ENCODE measurements at regions of chr22 and their contacts with region 1.

Region 1: DNA sequence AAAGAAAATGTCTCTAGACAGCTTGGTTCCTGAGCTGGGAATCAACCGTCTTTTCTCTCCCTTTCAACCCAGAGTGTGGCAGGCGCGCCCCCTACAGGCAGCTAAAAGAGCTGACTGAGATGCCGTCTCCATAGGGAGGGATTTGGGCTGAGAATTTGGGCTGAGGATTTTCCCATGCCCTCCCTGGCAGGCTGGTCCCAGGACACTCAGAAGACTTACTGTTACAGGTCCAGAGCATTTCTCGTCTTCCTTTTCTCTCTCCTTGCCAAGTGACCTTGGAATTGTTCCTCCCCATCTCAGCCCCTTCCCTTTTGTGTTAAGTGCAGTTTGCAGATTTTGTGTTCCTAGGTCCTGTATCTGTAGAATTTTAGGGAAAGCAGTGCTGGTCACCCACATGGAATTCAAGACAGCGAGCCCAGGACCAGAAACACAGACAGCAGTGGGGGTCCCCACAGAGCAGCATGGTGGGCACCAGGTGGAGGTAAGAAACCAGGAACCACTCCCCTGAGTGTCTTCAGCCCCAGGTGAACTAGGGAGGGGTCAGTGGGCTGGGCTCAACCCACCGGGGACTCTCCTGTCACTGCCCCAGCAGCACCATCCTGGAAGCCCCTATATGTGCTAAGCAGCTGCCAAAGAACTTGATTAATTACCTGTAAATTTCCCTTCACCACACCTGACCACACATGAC is 9.9 kb upstream of the IGLL5 start:
- DNase-seq: peak; percentile 83
- H3K4me3 Mint-ChIP-seq: no peak overlapping the region
- H3K27ac Mint-ChIP-seq: no peak overlapping the region
- H3K4me1 Mint-ChIP-seq: no peaks in the 10 kb centered on the region
- H3K27me3 Mint-ChIP-seq: peaks cover 59% of the 10 kb centered on the region
- CTCF ChIP-seq: peak; percentile 79

Region 2: GRCh38 chr22:22408731-22409696 is 468.7 kb before region 1 on chr22:
- CTCF ChIA-PET with region 1: no interaction called
- POLR2A ChIA-PET with region 1: no interaction called
- intact Hi-C with region 1: no loop called
- DNase-seq: peak; percentile 39
- H3K4me3 Mint-ChIP-seq: no peak overlapping the region
- H3K27ac Mint-ChIP-seq: no peak overlapping the region
- H3K4me1 Mint-ChIP-seq: no peaks in the 10 kb centered on the region
- H3K27me3 Mint-ChIP-seq: peaks cover 81% of the 10 kb centered on the region
- CTCF ChIP-seq: peak; percentile 39

Region 3: GRCh38 chr22:22753526-22754267 is 124.0 kb before region 1 on chr22:
- CTCF ChIA-PET with region 1: interaction called, 3 read pairs
- POLR2A ChIA-PET with region 1: interaction called, 3 read pairs
- intact Hi-C with region 1: loop called (anchors 1 kb)
- DNase-seq: peak; percentile 72
- H3K4me3 Mint-ChIP-seq: no peak overlapping the region
- H3K27ac Mint-ChIP-seq: no peak overlapping the region
- H3K4me1 Mint-ChIP-seq: peaks cover 27% of the 10 kb centered on the region
- H3K27me3 Mint-ChIP-seq: no peaks in the 10 kb centered on the region
- CTCF ChIP-seq: peak; percentile 69

Region 4: GRCh38 chr22:22787786-22788459 is 89.7 kb before region 1 on chr22:
- CTCF ChIA-PET with region 1: no interaction called
- POLR2A ChIA-PET with region 1: no interaction called
- intact Hi-C with region 1: loop called (anchors 1 kb)
- DNase-seq: peak; percentile 68
- H3K4me3 Mint-ChIP-seq: no peak overlapping the region
- H3K27ac Mint-ChIP-seq: no peak overlapping the region
- H3K4me1 Mint-ChIP-seq: no peaks in the 10 kb centered on the region
- H3K27me3 Mint-ChIP-seq: peaks cover 28% of the 10 kb centered on the region
- CTCF ChIP-seq: peak; percentile 79

Region 5: GRCh38 chr22:22848364-22848866 is 29.3 kb before region 1 on chr22:
- CTCF ChIA-PET with region 1: interaction called, 11 read pairs
- POLR2A ChIA-PET with region 1: no interaction called
- intact Hi-C with region 1: no loop called
- DNase-seq: peak; percentile 69
- H3K4me3 Mint-ChIP-seq: no peak overlapping the region
- H3K27ac Mint-ChIP-seq: no peak overlapping the region
- H3K4me1 Mint-ChIP-seq: no peaks in the 10 kb centered on the region
- H3K27me3 Mint-ChIP-seq: peaks cover 73% of the 10 kb centered on the region
- CTCF ChIP-seq: peak; percentile 75

Measured in MCF 10A (cell line).